Endothelial cell of umbilical vein (primary cell): ENCODE measurements at regions of chr1 and their contacts with region 1.

Region 1: DNA sequence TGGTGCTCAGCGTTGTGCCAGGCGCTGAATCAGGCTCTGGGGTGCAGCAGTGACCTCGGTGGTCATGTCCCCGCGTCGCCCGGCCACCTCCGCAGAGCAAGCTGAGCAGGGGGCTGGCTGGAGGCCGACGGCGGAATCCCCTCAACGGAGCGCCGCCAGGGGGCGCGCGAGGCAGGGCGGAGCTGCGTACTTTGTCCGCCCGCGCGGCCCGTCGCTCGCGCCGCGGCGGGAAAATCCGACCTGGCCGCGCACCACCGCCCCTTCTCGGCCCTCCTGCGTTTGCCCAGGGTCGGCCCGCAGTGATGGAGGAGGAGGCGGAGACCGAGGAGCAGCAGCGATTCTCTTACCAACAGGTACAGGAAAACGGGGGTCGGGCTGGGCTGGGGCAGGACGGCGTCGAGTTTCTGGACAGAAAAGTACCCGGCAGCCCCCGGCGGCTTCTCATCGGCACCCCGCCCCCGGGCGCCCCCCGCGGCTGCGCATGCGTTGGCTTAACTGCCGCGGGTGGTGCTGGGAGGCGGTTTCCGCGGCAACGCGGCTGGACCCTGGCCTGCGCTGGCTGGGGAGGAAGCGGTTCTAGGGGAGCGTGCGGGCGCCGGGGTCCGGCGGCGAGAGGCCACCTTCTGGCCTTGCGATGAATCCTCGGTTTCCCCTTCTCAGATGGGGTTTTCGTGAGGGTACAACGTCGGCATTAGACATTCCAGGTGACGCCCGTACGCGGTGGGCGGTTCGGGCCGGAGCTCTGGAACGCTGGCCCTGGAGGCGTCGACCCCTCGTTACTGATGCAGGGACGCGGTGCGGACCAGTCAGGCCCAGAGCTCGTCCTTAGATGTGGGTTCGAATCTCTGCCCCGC is at the start of gene CENPS:
- DNase-seq: peak; percentile 92
- H3K4me3 ChIP-seq: peak within 1 kb of the TSS; percentile 35 to 67 (median 55)
- H3K27ac ChIP-seq: peak within 1 kb of the TSS; percentile 42
- H3K4me1 ChIP-seq: peaks cover 14% of the 10 kb centered on the region
- H3K27me3 ChIP-seq: no peaks in the 10 kb centered on the region
- CTCF ChIP-seq: peak; percentile 94 to 97
- POLR2A ChIP-seq: peak; percentile 73
- total RNA-seq, gene CENPS: 16.2 and 17.0 TPM in 2 replicates

Region 2: DNA sequence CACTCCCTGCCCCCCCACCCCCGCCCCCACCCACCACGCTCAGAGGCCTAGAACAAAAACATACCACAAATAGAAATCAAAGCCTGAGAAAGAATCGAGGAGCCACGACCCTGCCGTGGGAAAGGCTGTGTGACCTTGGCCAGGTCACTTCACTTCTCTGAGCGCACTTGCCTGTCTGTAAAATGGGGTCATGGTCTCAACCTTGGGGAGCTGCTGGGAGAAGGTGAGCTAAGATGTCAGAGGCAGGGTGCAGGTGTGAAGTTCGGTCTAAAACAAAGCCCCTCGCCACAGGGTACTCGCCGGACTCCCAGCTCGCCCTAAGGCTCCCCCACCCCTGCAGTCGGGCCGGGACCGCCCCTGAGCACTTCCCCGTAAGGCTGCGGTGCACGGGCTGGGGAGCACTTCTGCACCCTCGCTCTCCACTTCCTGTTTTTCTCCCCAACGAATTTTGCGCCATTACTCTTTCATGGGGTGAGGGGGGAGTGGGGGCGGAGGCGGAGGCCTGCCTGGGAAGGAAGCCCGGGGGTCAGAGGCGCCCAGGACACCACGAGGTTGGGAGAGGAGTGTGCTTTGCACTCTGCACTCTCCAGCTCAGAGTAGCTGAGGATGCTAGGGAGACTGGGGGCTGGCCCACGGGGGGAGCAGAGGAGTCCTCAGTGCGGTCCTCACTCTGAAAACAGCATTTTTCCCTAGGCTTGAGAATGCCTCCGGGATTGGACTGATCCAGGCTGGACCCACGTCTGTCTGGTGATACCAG is 800.8 kb before region 1 on chr1:
- CTCF ChIA-PET with region 1: no interaction called
- POLR2A ChIA-PET with region 1: no interaction called
- dilution Hi-C with region 1: no loop called
- intact Hi-C with region 1: loop called (anchors 10 kb)
- DNase-seq: no peak
- H3K4me3 ChIP-seq: no peak overlapping the region
- H3K27ac ChIP-seq: no peak overlapping the region
- H3K4me1 ChIP-seq: no peaks in the 10 kb centered on the region
- H3K27me3 ChIP-seq: no peaks in the 10 kb centered on the region
- CTCF ChIP-seq: no peak
- POLR2A ChIP-seq: no peak

Region 3: GRCh38 chr1:9942939-9943788 is 487.3 kb before region 1 on chr1 and contains the starts of genes LZIC and NMNAT1:
- CTCF ChIA-PET with region 1: no interaction called
- POLR2A ChIA-PET with region 1: no interaction called
- dilution Hi-C with region 1: no loop called
- intact Hi-C with region 1: loop called (anchors 1 kb)
- DNase-seq: peak; percentile 94
- H3K4me3 ChIP-seq: peak within 1 kb of the TSS; percentile 79 to 99 (median 95)
- H3K27ac ChIP-seq: peak within 1 kb of the TSS; percentile 91
- H3K4me1 ChIP-seq: peaks cover 4% of the 10 kb centered on the region
- H3K27me3 ChIP-seq: no peaks in the 10 kb centered on the region
- CTCF ChIP-seq: no peak
- POLR2A ChIP-seq: peak; percentile 96
- total RNA-seq, gene LZIC: 22.7 and 23.4 TPM in 2 replicates
- total RNA-seq, gene NMNAT1: 7.4 and 9.8 TPM in 2 replicates

Region 4: GRCh38 chr1:10209905-10210810 is 220.3 kb before region 1 on chr1 and contains the start of gene KIF1B:
- CTCF ChIA-PET with region 1: interaction called, 10 read pairs
- POLR2A ChIA-PET with region 1: no interaction called
- dilution Hi-C with region 1: no loop called
- intact Hi-C with region 1: loop called (anchors 1 kb)
- DNase-seq: peak; percentile 98
- H3K4me3 ChIP-seq: peak within 1 kb of the TSS; percentile 68 to 83 (median 79)
- H3K27ac ChIP-seq: peak within 1 kb of the TSS; percentile 87
- H3K4me1 ChIP-seq: peaks cover 15% of the 10 kb centered on the region
- H3K27me3 ChIP-seq: no peaks in the 10 kb centered on the region
- CTCF ChIP-seq: peak; percentile 98 to 99
- POLR2A ChIP-seq: peak; percentile 55
- total RNA-seq, gene KIF1B: 46.6 and 58.6 TPM in 2 replicates

Region 5: GRCh38 chr1:10387413-10388079 is 42.9 kb before region 1 on chr1:
- CTCF ChIA-PET with region 1: interaction called, 7 read pairs
- POLR2A ChIA-PET with region 1: interaction called, 12 read pairs
- dilution Hi-C with region 1: no loop called
- intact Hi-C with region 1: no loop called
- DNase-seq: peak; percentile 63
- H3K4me3 ChIP-seq: no peak overlapping the region
- H3K27ac ChIP-seq: peak overlapping the region; percentile 71
- H3K4me1 ChIP-seq: peaks cover 12% of the 10 kb centered on the region
- H3K27me3 ChIP-seq: no peaks in the 10 kb centered on the region
- CTCF ChIP-seq: no peak
- POLR2A ChIP-seq: no peak

Region 6: GRCh38 chr1:10415211-10415930 is 15.1 kb before region 1 on chr1:
- CTCF ChIA-PET with region 1: interaction called, 12 read pairs
- POLR2A ChIA-PET with region 1: interaction called, 6 read pairs
- dilution Hi-C with region 1: no loop called
- intact Hi-C with region 1: no loop called
- DNase-seq: peak; percentile 84
- H3K4me3 ChIP-seq: no peak overlapping the region
- H3K27ac ChIP-seq: peak overlapping the region; percentile 92
- H3K4me1 ChIP-seq: peaks cover 17% of the 10 kb centered on the region
- H3K27me3 ChIP-seq: no peaks in the 10 kb centered on the region
- CTCF ChIP-seq: no peak
- POLR2A ChIP-seq: peak; percentile 40

Region 7: GRCh38 chr1:10494754-10495474 is 64.5 kb after region 1 on chr1:
- CTCF ChIA-PET with region 1: interaction called, 123 read pairs
- POLR2A ChIA-PET with region 1: interaction called, 3 read pairs
- dilution Hi-C with region 1: no loop called
- intact Hi-C with region 1: loop called (anchors 1 kb)
- DNase-seq: peak; percentile 59
- H3K4me3 ChIP-seq: no peak overlapping the region
- H3K27ac ChIP-seq: no peak overlapping the region
- H3K4me1 ChIP-seq: peaks cover 5% of the 10 kb centered on the region
- H3K27me3 ChIP-seq: no peaks in the 10 kb centered on the region
- CTCF ChIP-seq: peak; percentile 92 to 93
- POLR2A ChIP-seq: no peak